CD14-positive monocyte (primary cell): ENCODE measurements at regions of chr9 and their contacts with region 1.

Region 1: GRCh38 chr9:134936346-134937163 is 18.8 kb upstream of the FCN1 start:
- DNase-seq: peak; percentile 87 to 94 (median 87)
- H3K4me3 ChIP-seq: peak overlapping the region in 1 of 3 experiments; percentile 59
- H3K4me3 Mint-ChIP-seq: peak overlapping the region in 1 of 2 donors; percentile 73
- H3K27ac ChIP-seq: peak overlapping the region; percentile 90 to 92
- H3K27ac Mint-ChIP-seq: peak overlapping the region; percentile 90 to 98 (median 96)
- H3K4me1 ChIP-seq: peaks cover 86 to 94% of the 10 kb centered on the region in 2 donors
- H3K4me1 Mint-ChIP-seq: peaks cover 90% of the 10 kb centered on the region
- H3K27me3 ChIP-seq: no peaks in the 10 kb centered on the region
- H3K27me3 Mint-ChIP-seq: peaks cover 11 to 20% (median 13%) of the 10 kb centered on the region in 3 donors
- CTCF ChIP-seq: no peak

Region 2: DNA sequence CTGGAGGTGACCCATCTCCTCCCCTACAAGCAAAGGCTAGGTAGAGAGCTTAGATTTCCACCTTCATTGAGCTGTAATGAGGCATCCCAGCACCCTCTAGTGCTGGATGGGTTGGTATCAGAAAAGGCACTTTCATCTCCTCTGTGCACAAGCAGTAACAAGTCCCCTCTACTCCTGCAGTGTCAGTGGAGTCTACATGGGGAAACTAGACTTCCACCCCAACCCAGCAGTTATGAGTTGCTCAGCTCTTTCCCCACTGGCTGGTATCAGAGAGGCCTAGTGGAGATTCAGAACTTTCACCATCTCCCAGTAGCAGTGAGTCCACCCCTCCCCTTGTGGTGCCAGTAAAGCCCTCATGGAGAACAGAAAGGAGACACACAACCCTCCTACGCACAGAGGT is 36.7 kb before region 1 on chr9:
- intact Hi-C with region 1: loop called in 1 of 2 experiments (anchors 5 kb)
- DNase-seq: peak in 1 of 3 donors; percentile 0
- H3K4me3 ChIP-seq: no peak overlapping the region
- H3K4me3 Mint-ChIP-seq: no peak overlapping the region
- H3K27ac ChIP-seq: no peak overlapping the region
- H3K27ac Mint-ChIP-seq: no peak overlapping the region
- H3K4me1 ChIP-seq: no peaks in the 10 kb centered on the region
- H3K4me1 Mint-ChIP-seq: peaks cover 5% of the 10 kb centered on the region
- H3K27me3 ChIP-seq: no peaks in the 10 kb centered on the region
- H3K27me3 Mint-ChIP-seq: peaks cover 2 to 20% (median 8%) of the 10 kb centered on the region in 3 donors
- CTCF ChIP-seq: no peak

Region 3: GRCh38 chr9:134922066-134922931 is 14.3 kb before region 1 on chr9:
- intact Hi-C with region 1: loop called in 1 of 2 experiments (anchors 2 kb)
- DNase-seq: peak; percentile 85 to 90 (median 89)
- H3K4me3 ChIP-seq: peak overlapping the region in 1 of 3 experiments; percentile 32
- H3K4me3 Mint-ChIP-seq: peak overlapping the region in 1 of 2 donors; percentile 80
- H3K27ac ChIP-seq: peak overlapping the region; percentile 92 to 96
- H3K27ac Mint-ChIP-seq: peak overlapping the region; percentile 97 to 100 (median 99)
- H3K4me1 ChIP-seq: peaks cover 94 to 98% of the 10 kb centered on the region in 2 donors
- H3K4me1 Mint-ChIP-seq: peaks cover 89% of the 10 kb centered on the region
- H3K27me3 ChIP-seq: no peaks in the 10 kb centered on the region
- H3K27me3 Mint-ChIP-seq: peaks cover 0 to 5% (median 0%) of the 10 kb centered on the region in 3 donors
- CTCF ChIP-seq: no peak